Activated naive CD4-positive, alpha-beta T cell treated with anti-CD3 and anti-CD28 coated beads for 36 hours (primary cell): ENCODE measurements at regions of chr21 and their contacts with region 1.

Region 1: GRCh38 chr21:33199516-33200217 is 30.1 kb upstream of the IFNAR2 start:
- DNase-seq: peak; percentile 93
- H3K4me3 Mint-ChIP-seq: no peak overlapping the region
- H3K27ac Mint-ChIP-seq: peak overlapping the region; percentile 43
- H3K4me1 Mint-ChIP-seq: peaks cover 31% of the 10 kb centered on the region
- H3K27me3 Mint-ChIP-seq: no peaks in the 10 kb centered on the region

Region 2: DNA sequence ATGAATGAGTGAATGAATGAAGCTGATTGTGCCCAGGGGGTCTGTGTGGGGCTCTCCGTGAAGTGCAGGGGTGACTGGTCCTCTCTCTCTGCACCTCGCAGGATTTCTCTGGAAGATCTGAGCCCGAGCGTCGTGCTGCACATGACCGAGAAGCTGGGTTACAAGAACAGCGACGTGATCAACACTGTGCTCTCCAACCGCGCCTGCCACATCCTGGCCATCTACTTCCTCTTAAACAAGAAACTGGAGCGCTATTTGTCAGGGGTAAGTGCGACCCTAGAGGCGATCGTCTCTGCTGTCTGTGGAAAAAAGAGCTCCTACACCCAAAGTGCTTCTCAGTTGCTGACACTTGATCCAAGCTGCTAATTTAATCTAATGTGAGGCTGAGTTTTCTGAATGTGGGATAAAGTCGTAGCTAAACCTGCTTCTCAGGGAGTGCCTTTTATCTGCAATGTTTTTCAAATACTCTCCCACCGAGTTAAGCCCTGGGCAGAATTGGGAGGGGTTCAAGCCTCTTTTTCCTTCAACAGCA is 1225.1 kb before region 1 on chr21:
- CTCF ChIA-PET with region 1: no interaction called
- intact Hi-C with region 1: no loop called
- DNase-seq: peak; percentile 36
- H3K4me3 Mint-ChIP-seq: no peak overlapping the region
- H3K27ac Mint-ChIP-seq: no peak overlapping the region
- H3K4me1 Mint-ChIP-seq: peaks cover 5% of the 10 kb centered on the region
- H3K27me3 Mint-ChIP-seq: peaks cover 11% of the 10 kb centered on the region

Region 3: GRCh38 chr21:32747396-32747795 is 452.3 kb before region 1 on chr21:
- CTCF ChIA-PET with region 1: no interaction called
- intact Hi-C with region 1: no loop called
- DNase-seq: no peak
- H3K4me3 Mint-ChIP-seq: no peak overlapping the region
- H3K27ac Mint-ChIP-seq: peak overlapping the region; percentile 7
- H3K4me1 Mint-ChIP-seq: peaks cover 26% of the 10 kb centered on the region
- H3K27me3 Mint-ChIP-seq: no peaks in the 10 kb centered on the region

Region 4: GRCh38 chr21:32900814-32901213 is 298.9 kb before region 1 on chr21:
- CTCF ChIA-PET with region 1: no interaction called
- intact Hi-C with region 1: no loop called
- DNase-seq: no peak
- H3K4me3 Mint-ChIP-seq: no peak overlapping the region
- H3K27ac Mint-ChIP-seq: no peak overlapping the region
- H3K4me1 Mint-ChIP-seq: no peaks in the 10 kb centered on the region
- H3K27me3 Mint-ChIP-seq: no peaks in the 10 kb centered on the region

Region 5: GRCh38 chr21:32940079-32941014 is 259.3 kb before region 1 on chr21:
- CTCF ChIA-PET with region 1: interaction called, 12 read pairs
- intact Hi-C with region 1: loop called (anchors 1 kb)
- DNase-seq: peak; percentile 60
- H3K4me3 Mint-ChIP-seq: no peak overlapping the region
- H3K27ac Mint-ChIP-seq: no peak overlapping the region
- H3K4me1 Mint-ChIP-seq: peaks cover 4% of the 10 kb centered on the region
- H3K27me3 Mint-ChIP-seq: no peaks in the 10 kb centered on the region

Region 6: DNA sequence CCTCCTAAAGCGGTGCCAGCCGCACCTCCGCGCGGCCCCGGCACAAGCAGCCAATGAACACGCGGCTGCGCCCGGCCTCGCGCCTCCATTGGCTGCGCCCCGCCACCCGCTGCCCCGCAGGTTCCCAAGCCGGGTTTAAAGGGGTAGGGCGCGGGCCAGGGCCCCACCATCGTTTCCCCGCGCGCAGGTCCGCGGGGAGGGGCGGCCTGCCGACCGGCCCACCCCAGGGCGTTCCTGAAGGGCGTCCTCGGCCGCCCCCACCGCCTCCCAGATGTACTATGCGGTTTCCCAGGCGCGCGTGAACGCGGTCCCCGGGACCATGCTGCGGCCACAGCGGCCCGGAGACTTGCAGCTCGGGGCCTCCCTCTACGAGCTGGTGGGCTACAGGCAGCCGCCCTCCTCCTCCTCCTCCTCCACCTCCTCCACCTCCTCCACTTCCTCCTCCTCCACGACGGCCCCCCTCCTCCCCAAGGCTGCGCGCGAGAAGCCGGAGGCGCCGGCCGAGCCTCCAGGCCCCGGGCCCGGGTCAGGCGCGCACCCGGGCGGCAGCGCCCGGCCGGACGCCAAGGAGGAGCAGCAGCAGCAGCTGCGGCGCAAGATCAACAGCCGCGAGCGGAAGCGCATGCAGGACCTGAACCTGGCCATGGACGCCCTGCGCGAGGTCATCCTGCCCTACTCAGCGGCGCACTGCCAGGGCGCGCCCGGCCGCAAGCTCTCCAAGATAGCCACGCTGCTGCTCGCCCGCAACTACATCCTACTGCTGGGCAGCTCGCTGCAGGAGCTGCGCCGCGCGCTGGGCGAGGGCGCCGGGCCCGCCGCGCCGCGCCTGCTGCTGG is 129.5 kb before region 1 on chr21 and contains the start of gene OLIG1:
- CTCF ChIA-PET with region 1: no interaction called
- intact Hi-C with region 1: loop called (anchors 5 kb)
- DNase-seq: peak; percentile 25
- H3K4me3 Mint-ChIP-seq: peak within 1 kb of the TSS; percentile 65
- H3K27ac Mint-ChIP-seq: no peak within 1 kb of the TSS
- H3K4me1 Mint-ChIP-seq: peaks cover 10% of the 10 kb centered on the region
- H3K27me3 Mint-ChIP-seq: peaks cover 53% of the 10 kb centered on the region
- total RNA-seq, gene OLIG1: not detected

Region 7: DNA sequence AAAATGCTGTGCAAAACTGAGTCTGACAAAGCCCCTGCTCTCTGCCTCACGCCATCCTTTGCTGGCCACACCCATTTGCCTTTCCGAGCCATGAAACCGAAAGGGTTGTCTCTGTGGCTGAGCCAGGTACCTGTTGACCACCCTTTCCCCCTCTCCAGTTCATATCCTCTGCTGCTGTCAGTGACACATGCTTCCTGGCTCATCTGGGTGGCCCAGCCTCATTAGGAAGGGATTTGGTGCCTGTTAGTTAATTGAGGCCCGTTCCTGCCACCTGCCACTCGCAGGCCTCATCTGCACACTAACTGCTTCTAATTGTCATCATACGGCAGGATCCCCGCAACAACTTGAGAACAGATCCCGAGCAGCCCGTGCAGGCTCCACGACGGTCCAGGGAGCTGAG is 50.5 kb before region 1 on chr21:
- CTCF ChIA-PET with region 1: interaction called, 12 read pairs
- intact Hi-C with region 1: no loop called
- DNase-seq: no peak
- H3K4me3 Mint-ChIP-seq: no peak overlapping the region
- H3K27ac Mint-ChIP-seq: no peak overlapping the region
- H3K4me1 Mint-ChIP-seq: peaks cover 3% of the 10 kb centered on the region
- H3K27me3 Mint-ChIP-seq: peaks cover 7% of the 10 kb centered on the region

Region 8: DNA sequence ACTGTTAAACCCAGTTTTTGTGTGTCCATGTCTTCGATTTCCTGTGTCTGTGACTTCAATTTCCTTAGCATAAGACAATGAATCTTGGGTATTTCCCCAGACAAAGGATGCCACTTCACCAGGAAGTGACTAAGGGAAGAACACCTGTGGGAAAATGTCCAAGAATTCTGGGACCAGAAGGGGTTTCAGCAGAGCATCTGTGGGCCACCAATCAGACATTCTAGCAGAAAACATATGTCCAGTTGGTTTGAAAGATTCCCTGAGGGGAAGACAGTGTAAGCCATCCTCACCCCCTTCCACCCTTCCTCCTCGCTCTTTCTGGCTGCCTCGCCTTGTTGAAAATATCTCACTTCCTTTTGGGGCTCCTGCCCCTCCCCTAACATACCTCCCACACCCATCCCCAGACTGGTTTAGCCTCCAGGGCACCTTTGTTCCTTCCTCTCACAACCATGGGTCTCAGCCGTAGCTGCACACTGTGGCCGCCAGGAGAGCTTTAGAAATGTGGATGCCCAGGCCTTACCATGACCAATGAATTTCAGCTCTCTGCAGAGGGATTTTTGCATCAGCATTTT is 99.6 kb after region 1 on chr21:
- CTCF ChIA-PET with region 1: interaction called, 10 read pairs
- intact Hi-C with region 1: no loop called
- DNase-seq: peak; percentile 61
- H3K4me3 Mint-ChIP-seq: peak overlapping the region; percentile 33
- H3K27ac Mint-ChIP-seq: peak overlapping the region; percentile 61
- H3K4me1 Mint-ChIP-seq: peaks cover 48% of the 10 kb centered on the region
- H3K27me3 Mint-ChIP-seq: no peaks in the 10 kb centered on the region

Region 9: DNA sequence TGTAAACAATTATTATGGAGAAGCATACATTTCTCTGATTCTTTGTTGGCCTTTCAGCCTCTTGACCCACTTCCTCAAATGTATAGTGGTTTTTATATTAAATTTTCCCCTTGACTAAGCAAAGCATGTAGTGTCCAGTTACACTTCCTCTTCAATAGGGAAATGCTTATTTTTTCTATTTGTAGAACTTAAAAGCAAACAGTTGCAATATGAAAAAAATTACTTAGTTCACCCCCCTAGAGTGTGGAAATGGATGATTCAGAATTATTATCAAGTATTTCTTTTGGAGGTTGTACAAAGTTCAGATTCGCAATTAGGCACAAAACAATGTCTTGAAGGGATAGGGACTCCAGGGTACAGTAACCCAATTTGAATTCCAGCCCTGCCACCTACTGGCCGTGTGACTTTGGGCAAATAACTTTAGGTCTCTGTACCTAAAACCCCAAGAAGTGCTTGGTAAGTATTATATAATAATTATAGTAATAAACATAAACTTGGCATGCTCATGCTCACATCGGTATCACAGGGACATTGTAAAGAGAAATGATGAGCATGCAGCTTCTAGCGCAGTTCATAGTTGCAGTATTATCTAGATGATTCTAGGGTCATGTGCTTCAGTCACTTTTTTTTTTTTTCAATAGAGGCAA is 174.9 kb after region 1 on chr21:
- CTCF ChIA-PET with region 1: interaction called, 18 read pairs
- intact Hi-C with region 1: loop called (anchors 1 kb)
- DNase-seq: peak; percentile 81
- H3K4me3 Mint-ChIP-seq: no peak overlapping the region
- H3K27ac Mint-ChIP-seq: no peak overlapping the region
- H3K4me1 Mint-ChIP-seq: peaks cover 13% of the 10 kb centered on the region
- H3K27me3 Mint-ChIP-seq: no peaks in the 10 kb centered on the region

Region 10: DNA sequence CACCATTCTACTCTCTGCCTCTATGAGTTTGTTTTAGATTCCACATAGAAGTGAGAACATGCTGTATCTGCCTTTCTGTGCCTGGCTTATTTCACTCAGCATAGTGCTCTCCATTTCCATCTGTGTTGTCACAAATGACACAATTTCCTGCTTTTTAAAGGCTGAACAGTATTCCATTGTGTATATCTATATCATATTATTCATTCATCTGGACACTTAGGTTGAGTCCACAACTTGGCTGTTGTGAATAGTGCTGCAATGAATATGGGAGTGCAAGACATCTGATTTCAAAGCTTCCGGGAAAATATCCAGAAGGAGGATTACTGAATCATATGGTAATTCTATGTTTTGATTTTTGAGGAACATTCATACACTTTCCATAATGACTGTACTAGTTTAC is 408.9 kb after region 1 on chr21:
- CTCF ChIA-PET with region 1: interaction called, 8 read pairs
- intact Hi-C with region 1: loop called (anchors 1 kb)
- DNase-seq: no peak
- H3K4me3 Mint-ChIP-seq: no peak overlapping the region
- H3K27ac Mint-ChIP-seq: peak overlapping the region; percentile 1
- H3K4me1 Mint-ChIP-seq: no peaks in the 10 kb centered on the region
- H3K27me3 Mint-ChIP-seq: no peaks in the 10 kb centered on the region